PC-3 (cell line): ENCODE measurements at regions of chr22 and their contacts with region 1.

Region 1: DNA sequence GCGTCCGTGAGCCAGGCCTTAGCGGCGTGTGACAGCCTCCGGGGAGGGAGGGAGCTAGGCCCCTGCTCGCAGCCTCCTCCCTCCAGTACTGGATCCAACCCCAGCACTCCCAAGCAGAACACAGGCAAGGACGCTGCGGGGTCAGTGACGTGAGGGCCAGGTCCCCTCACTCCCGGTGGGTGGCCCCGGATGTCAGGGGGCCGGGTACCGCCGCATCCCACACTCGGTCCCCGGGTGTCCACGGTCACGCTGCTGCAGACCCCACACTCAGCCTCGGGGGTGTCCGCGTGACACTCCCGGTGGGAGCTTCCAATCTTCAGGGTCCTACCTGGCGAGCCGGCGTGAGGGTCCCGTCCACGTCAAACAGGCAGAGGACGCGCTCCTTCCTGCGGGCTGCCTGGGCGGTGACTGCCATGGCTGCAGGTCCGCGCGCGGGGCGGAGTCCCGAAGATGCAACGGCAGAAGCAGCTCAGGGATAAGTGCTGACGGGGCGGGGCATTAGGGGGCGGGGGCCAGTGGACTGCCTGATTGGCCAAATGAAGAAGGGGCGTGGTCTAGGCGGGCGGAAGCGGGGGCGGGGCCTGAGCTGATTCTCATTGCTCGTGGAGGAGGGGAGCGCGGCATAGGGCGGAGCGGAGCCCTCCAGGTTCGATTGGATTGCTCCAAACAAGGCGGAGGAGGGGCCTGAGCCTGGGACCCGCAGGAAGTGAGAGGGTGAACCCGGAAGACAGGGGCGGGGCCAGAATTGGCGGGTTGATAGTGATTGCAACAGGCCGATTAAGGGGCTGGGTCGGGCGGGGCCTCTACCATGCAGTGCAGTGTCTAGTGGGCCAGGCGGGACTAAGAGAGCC is at the start of gene PMM1:
- DNase-seq: peak; percentile 98
- ATAC-seq: peak; percentile 94
- H3K4me3 ChIP-seq: peak within 1 kb of the TSS; percentile 94
- H3K27ac ChIP-seq: no peak within 1 kb of the TSS
- H3K4me1 ChIP-seq: peaks cover 17% of the 10 kb centered on the region
- H3K27me3 ChIP-seq: no peaks in the 10 kb centered on the region
- CTCF ChIP-seq: no peak
- total RNA-seq, gene PMM1: 18.0 and 18.6 TPM in 2 replicates

Region 2: DNA sequence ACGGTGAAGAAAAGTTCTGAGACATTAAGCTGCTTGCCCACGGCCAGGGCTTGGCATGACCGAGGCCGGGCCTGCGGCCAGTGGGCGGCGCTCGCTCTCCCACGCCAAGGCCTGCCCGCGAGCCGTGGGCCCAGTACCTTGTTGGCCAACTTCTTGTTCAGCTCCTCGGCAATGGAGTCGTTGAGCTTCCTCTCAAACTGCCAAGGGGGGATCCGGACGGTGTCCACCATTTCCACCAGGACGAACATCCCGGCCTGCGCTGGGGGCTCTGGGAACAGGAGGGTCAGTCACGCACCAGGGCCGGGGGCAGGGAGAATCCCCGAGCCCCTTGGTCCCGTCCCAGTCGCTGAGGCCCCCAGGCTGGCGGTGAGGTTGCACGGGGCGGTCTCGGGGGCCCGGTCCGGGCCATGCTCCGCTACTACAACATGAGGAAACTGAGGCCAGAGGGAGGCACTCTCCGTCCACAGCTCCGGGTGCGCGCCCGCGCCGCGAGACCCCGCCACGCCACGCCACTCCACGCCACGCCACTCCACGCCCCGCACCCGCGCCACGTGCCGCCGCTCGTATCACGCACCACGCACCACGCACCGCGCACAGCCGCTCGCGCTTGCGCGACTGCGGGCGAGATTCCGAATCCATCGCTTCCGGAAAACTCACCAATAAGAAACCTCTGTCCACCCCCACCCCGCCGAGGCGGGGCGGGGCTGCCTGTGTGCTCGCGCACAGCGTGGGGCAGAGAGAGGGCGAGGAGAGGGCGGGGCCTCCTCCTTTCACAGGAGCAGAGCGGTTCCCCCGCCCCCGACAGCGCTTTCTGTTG is 45.6 kb before region 1 on chr22 and contains the start of gene POLR3H:
- CTCF ChIA-PET with region 1: interaction called, 11 read pairs
- POLR2A ChIA-PET with region 1: interaction called, 8 read pairs
- intact Hi-C with region 1: no loop called
- DNase-seq: peak; percentile 96
- ATAC-seq: peak; percentile 95
- H3K4me3 ChIP-seq: peak within 1 kb of the TSS; percentile 98
- H3K27ac ChIP-seq: peak within 1 kb of the TSS; percentile 57
- H3K4me1 ChIP-seq: 0 out of 2 replicates have a peak, but pooled peaks cover 6% of the 10 kb centered on the region
- H3K27me3 ChIP-seq: no peaks in the 10 kb centered on the region
- CTCF ChIP-seq: peak; percentile 73
- total RNA-seq, gene POLR3H: 21.2 and 30.4 TPM in 2 replicates

Region 3: DNA sequence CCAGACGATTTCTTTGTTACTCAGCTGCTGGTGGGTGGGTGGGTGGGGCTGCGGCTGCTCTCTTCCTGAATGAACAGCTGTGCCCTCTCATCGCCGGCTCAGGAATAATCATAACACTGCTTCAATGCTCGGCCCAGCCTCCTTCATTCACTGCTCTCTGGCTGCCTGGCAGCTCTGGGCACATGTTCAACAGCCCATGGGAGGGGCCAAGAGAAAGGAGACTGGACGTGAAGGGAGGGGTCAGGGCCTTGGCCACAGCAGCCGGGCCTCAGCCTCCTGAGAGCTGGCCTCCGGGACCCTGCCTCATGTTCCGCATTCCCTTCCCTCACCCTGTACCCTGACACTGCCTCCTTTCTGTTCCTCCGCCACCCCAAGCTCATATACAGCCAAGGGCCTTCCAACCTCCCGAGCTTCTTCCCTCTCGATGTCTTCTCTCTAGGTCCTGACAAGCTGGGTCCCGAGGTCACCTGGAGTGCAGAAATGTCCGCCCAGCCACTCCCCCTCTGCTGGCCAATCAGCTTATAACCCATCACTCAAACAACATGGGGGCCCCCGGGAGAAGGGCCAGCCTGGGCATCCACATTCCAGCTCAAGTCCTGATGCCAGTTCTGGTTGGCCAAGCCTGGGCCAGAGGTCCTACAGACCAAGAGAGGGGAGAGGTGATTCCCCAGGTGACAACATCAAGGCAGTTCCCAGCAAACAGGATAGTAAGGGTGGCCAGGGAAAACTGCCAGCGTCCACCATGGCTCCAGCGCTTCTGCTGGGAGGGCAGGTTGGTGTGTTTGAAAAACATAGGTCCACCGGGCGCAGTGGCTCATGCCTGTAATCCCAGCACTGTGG is 32.0 kb before region 1 on chr22:
- CTCF ChIA-PET with region 1: no interaction called
- POLR2A ChIA-PET with region 1: interaction called, 10 read pairs
- intact Hi-C with region 1: no loop called
- DNase-seq: no peak
- ATAC-seq: no peak
- H3K4me3 ChIP-seq: no peak overlapping the region
- H3K27ac ChIP-seq: no peak overlapping the region
- H3K4me1 ChIP-seq: 0 out of 2 replicates have a peak, but pooled peaks cover under 1% of the 10 kb centered on the region
- H3K27me3 ChIP-seq: no peaks in the 10 kb centered on the region
- CTCF ChIP-seq: no peak

Region 4: DNA sequence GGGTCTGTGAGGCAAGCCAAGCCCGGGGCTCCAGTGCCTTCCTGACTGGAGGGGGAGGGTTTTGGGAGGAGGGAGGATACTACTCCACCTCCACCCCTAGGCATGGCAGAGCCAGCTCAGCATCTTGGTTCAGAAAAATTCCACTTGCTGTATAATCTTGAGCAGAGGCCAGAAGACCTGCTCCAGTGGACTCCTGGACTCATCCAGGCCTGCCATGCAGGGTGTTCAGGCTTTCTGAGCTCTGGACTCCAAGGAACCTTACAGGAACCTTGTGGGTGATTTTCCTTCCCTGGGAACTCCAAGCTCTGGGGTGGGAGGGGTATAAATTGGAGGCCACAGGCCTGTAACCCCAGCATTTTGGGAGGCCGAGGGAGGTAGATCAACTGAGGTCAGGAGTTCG is 19.4 kb before region 1 on chr22:
- CTCF ChIA-PET with region 1: no interaction called
- POLR2A ChIA-PET with region 1: no interaction called
- intact Hi-C with region 1: no loop called
- DNase-seq: no peak
- ATAC-seq: no peak
- H3K4me3 ChIP-seq: no peak overlapping the region
- H3K27ac ChIP-seq: no peak overlapping the region
- H3K4me1 ChIP-seq: peaks cover 5% of the 10 kb centered on the region; the same call in 1 of the 2 replicates
- H3K27me3 ChIP-seq: no peaks in the 10 kb centered on the region
- CTCF ChIP-seq: no peak

Region 5: DNA sequence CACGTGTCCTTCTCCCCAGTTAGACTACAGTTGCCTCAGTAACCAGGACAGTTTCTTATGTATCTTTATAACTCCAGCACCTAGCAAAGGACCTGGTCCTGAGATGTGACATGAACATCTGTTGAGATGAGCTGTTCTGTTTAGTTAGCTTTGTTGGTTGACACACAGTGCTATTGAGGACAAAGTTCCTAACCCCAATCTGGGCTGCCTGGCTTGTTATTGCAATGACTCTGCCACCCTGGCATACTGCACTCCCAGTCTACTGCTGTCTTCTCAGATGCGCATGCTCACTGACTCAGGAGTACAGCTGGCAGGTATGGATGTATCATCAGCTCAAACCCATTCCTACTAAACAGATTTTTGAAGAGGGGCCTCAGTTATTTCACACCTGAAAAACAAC is 23.8 kb after region 1 on chr22:
- CTCF ChIA-PET with region 1: no interaction called
- POLR2A ChIA-PET with region 1: no interaction called
- intact Hi-C with region 1: no loop called
- DNase-seq: no peak
- ATAC-seq: no peak
- H3K4me3 ChIP-seq: no peak overlapping the region
- H3K27ac ChIP-seq: no peak overlapping the region
- H3K4me1 ChIP-seq: 0 out of 2 replicates have a peak, but pooled peaks cover 6% of the 10 kb centered on the region
- H3K27me3 ChIP-seq: no peaks in the 10 kb centered on the region
- CTCF ChIP-seq: no peak

Region 6: GRCh38 chr22:41642331-41643110 is 52.9 kb after region 1 on chr22:
- CTCF ChIA-PET with region 1: no interaction called
- POLR2A ChIA-PET with region 1: no interaction called
- intact Hi-C with region 1: no loop called
- DNase-seq: peak; percentile 6
- ATAC-seq: no peak
- H3K4me3 ChIP-seq: no peak overlapping the region
- H3K27ac ChIP-seq: no peak overlapping the region
- H3K4me1 ChIP-seq: no peaks in the 10 kb centered on the region
- H3K27me3 ChIP-seq: no peaks in the 10 kb centered on the region
- CTCF ChIP-seq: no peak